B cell (primary cell): ENCODE measurements at regions of chr11 and their contacts with region 1.

Region 1: GRCh38 chr11:78499971-78500370 is 74.7 kb downstream of the NARS2 start:
- DNase-seq: no peak
- ATAC-seq: no peak
- H3K4me3 ChIP-seq: no peak overlapping the region
- H3K4me3 Mint-ChIP-seq: no peak overlapping the region
- H3K27ac ChIP-seq: no peak overlapping the region
- H3K27ac Mint-ChIP-seq: no peak overlapping the region
- H3K4me1 ChIP-seq: no peaks in the 10 kb centered on the region
- H3K4me1 Mint-ChIP-seq: peaks cover 3% of the 10 kb centered on the region
- H3K27me3 ChIP-seq: no peaks in the 10 kb centered on the region
- H3K27me3 Mint-ChIP-seq: no peaks in the 10 kb centered on the region
- CTCF ChIP-seq: no peak

Region 2: GRCh38 chr11:78489184-78489583 is 10.8 kb before region 1 on chr11:
- CTCF ChIA-PET with region 1: no interaction called
- POLR2A ChIA-PET with region 1: no interaction called
- intact Hi-C with region 1: no loop called
- DNase-seq: no peak
- ATAC-seq: no peak
- H3K4me3 ChIP-seq: no peak overlapping the region
- H3K4me3 Mint-ChIP-seq: no peak overlapping the region
- H3K27ac ChIP-seq: no peak overlapping the region
- H3K27ac Mint-ChIP-seq: no peak overlapping the region
- H3K4me1 ChIP-seq: no peaks in the 10 kb centered on the region
- H3K4me1 Mint-ChIP-seq: no peaks in the 10 kb centered on the region
- H3K27me3 ChIP-seq: no peaks in the 10 kb centered on the region
- H3K27me3 Mint-ChIP-seq: no peaks in the 10 kb centered on the region
- CTCF ChIP-seq: no peak

Region 3: DNA sequence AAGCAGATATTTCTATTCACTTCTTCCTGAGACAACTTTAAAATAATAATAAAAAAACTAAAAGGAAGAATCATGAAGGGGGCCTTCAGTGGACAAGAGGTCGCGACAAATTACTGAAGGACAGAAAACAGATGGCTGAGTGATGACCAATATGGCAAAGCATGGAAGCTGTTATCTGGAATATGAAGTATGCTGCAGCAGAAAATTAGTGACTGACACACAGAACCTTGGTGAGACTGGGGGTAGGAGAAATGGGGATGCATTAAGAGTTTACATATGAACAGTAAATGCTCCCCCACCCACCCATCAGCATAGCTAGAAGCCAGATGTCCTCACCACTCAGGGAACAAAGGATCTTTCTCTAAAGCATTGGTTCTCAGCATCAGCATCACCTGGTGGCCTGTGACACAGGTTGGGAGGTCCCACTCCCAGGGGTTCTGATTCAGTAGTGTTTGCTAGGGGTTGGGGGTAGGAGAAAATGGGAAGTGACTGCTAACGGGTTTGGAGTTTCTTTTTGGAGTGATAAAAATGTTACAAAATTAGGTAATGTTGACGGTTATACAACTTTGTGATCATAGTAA is 15.0 kb after region 1 on chr11:
- CTCF ChIA-PET with region 1: no interaction called
- POLR2A ChIA-PET with region 1: no interaction called
- intact Hi-C with region 1: no loop called
- DNase-seq: no peak
- ATAC-seq: no peak
- H3K4me3 ChIP-seq: no peak overlapping the region
- H3K4me3 Mint-ChIP-seq: no peak overlapping the region
- H3K27ac ChIP-seq: no peak overlapping the region
- H3K27ac Mint-ChIP-seq: no peak overlapping the region
- H3K4me1 ChIP-seq: no peaks in the 10 kb centered on the region
- H3K4me1 Mint-ChIP-seq: no peaks in the 10 kb centered on the region
- H3K27me3 ChIP-seq: no peaks in the 10 kb centered on the region
- H3K27me3 Mint-ChIP-seq: no peaks in the 10 kb centered on the region
- CTCF ChIP-seq: no peak

Region 4: DNA sequence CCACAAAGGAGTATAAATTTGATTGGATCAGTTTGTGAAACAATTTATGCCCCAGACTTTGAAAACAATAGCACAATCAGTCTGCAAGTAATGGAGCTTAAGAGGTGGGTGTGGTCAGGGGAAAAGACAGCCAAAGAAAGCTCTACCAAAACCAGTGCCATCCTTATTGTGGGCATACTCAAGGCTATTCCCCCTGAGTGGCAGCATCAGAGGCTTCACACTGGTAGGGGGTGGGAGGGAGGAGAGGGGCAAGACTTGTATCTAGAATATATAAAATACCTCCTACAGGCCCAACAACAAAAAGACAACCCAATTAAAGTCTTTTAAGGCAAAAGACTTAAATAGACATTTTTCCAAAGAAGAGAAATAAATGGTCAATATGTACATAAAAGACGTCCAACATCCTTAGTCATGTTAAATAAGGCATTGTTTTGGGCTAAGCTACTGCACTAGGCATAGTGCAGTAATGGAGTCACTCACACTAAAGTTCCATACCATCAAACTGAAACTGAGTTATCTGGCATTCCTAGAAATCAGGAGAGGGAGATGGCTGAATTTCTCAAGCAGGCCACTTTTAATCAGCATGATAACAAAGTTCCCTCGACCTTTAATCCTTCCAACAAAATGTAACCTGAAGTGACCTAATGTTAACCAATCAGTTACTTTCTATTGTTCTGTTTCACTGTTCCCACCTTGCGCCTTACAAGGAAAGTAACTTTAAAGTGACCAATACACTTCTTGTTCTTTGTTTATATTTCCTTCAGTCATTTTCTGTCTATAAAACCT is 49.8 kb after region 1 on chr11:
- CTCF ChIA-PET with region 1: no interaction called
- POLR2A ChIA-PET with region 1: no interaction called
- intact Hi-C with region 1: loop called (anchors 10 kb)
- DNase-seq: no peak
- ATAC-seq: no peak
- H3K4me3 ChIP-seq: no peak overlapping the region
- H3K4me3 Mint-ChIP-seq: no peak overlapping the region
- H3K27ac ChIP-seq: no peak overlapping the region
- H3K27ac Mint-ChIP-seq: no peak overlapping the region
- H3K4me1 ChIP-seq: no peaks in the 10 kb centered on the region
- H3K4me1 Mint-ChIP-seq: peaks cover 1% of the 10 kb centered on the region
- H3K27me3 ChIP-seq: no peaks in the 10 kb centered on the region
- H3K27me3 Mint-ChIP-seq: no peaks in the 10 kb centered on the region
- CTCF ChIP-seq: no peak